ENCODE measurements at regions of chr4 and their contacts with region 1.

Region 1: GRCh38 chr4:7939377-7940108 is at the start of gene AFAP1:
- DNase-seq: peak; percentile 91 to 95
- ATAC-seq: peak; percentile 96
- H3K4me3 ChIP-seq: peak within 1 kb of the TSS; percentile 23 to 96
- H3K27ac ChIP-seq: peak within 1 kb of the TSS in 1 of 2 donors; percentile 63
- H3K4me1 ChIP-seq: no peaks in the 10 kb centered on the region
- H3K27me3 ChIP-seq: no peaks in the 10 kb centered on the region
- total RNA-seq, gene AFAP1: 40.5 to 60.5 TPM

Region 2: DNA sequence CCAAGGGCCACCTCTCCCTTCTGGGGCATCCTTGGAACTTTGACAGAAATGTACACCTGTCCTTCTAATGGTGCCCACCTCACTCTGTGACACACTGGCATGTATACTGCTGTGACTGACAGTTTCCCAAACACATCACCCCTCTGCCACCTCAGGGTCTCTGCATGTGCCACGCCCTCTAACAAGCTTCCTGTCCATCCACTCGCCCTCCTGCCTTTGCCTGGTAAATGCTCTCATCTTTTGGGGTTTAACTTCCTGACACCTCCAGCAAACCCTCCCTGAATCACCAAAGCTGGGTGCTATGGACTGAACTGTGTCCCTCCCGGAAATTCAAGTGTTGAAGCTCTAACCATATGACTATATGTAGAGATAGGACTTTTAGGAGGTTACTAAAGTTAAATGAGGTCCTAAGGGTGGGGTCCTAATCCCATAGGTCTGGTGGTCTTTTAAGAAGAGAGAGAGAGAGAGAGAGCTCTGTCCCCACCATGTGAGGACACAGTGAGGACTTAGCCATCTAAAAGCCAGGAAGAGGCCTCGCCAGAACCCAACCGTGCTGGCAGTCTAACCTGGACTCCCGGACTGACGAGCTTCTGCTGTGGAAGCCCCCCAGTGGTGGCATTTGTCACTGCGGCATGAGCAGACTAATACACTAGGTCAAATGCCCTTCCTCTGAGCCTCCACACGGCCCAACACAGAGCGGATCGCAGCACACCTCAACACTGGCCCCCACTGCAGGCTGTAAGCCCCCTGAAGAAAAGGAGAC is 95.5 kb before region 1 on chr4:
- intact Hi-C with region 1: loop called in 1 of 2 experiments (anchors 5 kb)
- DNase-seq: peak; percentile 78 to 91
- ATAC-seq: peak; percentile 46
- H3K4me3 ChIP-seq: no peak overlapping the region
- H3K27ac ChIP-seq: peak overlapping the region in 1 of 2 donors; percentile 28
- H3K4me1 ChIP-seq: peaks cover 0 to 3% of the 10 kb centered on the region in 2 donors
- H3K27me3 ChIP-seq: no peaks in the 10 kb centered on the region

Region 3: DNA sequence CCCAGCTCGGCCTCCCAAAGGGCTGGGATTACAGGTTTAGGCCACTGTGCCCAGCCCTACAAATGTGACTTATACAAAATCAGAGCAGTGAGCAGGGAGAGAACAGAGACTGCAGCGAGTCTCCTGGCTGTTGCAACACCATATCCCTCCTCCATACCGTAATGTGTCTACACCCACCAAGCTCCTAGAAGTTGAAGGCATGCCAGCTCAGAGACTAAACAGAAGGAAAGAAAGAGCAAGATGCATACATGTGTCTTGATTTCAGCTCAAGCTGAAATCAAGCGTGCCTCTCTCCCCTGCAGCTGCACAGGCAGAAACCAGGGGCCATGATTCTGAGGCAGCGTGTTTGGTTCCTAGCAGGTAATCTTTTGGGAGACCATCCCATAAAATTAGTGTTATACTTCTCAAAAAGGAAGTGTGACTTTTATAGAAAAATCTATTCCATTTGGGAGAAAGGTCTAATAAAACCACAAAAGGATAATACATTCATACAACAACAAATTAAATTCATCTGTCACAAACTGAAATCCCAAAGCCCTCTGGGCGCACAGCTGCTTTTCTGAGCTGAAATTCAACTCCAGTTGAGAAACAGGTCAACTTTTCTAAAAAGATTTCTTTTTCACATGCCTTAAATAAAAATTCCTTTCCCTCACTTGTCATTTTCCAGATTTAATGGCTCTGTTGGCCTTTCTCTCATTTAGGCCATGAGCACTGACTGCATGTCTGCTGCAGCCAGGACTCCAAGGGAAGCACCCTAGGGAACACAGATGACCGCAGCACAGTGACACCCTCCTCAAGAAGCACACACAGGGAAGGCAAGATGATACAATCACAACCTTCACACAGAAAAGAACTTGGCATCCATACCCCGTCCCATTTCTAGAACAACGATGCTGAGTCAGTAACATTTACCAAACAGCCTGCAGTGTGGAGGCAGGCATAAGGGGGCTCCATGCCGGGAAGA is 34.3 kb before region 1 on chr4:
- intact Hi-C with region 1: loop called in 1 of 2 experiments (anchors 5 kb)
- DNase-seq: no peak
- ATAC-seq: peak; percentile 84
- H3K4me3 ChIP-seq: no peak overlapping the region
- H3K27ac ChIP-seq: peak overlapping the region; percentile 4 to 99
- H3K4me1 ChIP-seq: peaks cover 0 to 8% of the 10 kb centered on the region in 2 donors
- H3K27me3 ChIP-seq: no peaks in the 10 kb centered on the region

Region 4: GRCh38 chr4:8035371-8035780 is 95.8 kb after region 1 on chr4:
- intact Hi-C with region 1: no loop called
- DNase-seq: no peak
- ATAC-seq: no peak
- H3K4me3 ChIP-seq: no peak overlapping the region
- H3K27ac ChIP-seq: no peak overlapping the region
- H3K4me1 ChIP-seq: no peaks in the 10 kb centered on the region
- H3K27me3 ChIP-seq: no peaks in the 10 kb centered on the region

Measured in aorta (tissue), 5 donors.